ENCODE measurements at regions of chr2 and their contacts with region 1.

Region 1: DNA sequence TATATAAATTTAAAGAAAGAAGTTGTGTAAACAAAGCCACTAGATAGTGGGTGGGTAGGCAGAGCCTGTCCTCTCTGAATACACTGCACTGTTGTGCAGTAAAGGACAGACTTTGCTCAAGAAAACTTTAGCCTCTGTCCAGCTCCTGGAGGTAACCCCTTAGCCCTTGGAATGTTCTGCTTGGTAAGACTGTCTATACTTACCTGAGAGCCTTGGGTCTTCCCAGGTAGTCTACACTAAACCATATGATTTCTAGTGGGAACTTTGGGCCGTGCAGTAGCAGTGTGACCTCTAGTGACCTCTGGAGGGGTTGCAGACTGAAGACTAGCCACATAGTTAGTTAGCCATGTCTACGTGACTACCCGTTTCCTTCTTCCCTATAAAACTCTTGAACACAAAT is 678.3 kb upstream of the NRXN1 start:
- DNase-seq: peak; percentile 12
- ATAC-seq: peak; percentile 79
- H3K4me3 ChIP-seq: no peak overlapping the region
- H3K27ac ChIP-seq: no peak overlapping the region
- H3K4me1 ChIP-seq: no peaks in the 10 kb centered on the region
- H3K27me3 ChIP-seq: no peaks in the 10 kb centered on the region
- CTCF ChIP-seq: peak in 1 of 3 experiments; percentile 38; a peak in 2 of 6 replicates
- POLR2A ChIP-seq: no peak
- RAD21 ChIP-seq: peak; percentile 48

Region 2: DNA sequence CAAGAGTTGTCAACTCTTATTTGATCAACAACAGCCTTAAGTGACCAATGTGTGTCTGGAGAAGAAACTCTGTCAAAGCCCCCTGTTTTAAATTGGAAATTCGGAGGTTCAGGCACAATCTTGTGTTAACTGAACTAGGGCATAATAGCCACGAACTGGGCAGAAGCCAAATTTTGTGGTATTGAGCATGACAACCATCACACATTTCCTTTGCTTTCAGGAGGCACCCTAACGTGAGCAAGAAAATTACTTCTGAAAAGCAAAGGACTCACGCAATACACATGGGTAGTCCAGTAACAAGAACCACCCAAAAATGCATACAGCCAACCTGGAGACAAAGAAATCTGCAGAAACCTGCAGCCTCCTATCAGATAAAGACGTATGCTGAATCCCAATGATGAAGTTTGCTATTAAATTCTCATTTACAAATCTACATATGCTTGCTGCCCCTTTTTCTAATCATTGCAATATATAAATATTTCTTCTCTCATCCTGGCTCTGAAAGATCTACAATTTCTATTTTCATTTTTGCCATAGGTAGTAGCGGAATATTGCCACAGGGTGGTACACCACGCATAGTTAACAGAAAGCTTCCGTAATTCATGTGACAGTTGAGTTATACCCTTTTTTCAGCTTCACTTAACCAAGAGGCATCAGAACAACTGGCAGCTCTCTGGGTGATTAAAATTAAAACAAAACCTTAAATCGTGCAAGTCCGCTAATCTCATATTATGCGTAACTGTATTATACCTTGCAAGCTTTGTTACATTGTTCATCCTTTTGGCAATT is 1174.1 kb before region 1 on chr2:
- CTCF ChIA-PET with region 1: no interaction called
- POLR2A ChIA-PET with region 1: no interaction called
- RAD21 ChIA-PET with region 1: no interaction called
- intact Hi-C with region 1: loop called (anchors 5 kb)
- DNase-seq: peak; percentile 10
- ATAC-seq: peak; percentile 67
- H3K4me3 ChIP-seq: no peak overlapping the region
- H3K27ac ChIP-seq: no peak overlapping the region
- H3K4me1 ChIP-seq: no peaks in the 10 kb centered on the region
- H3K27me3 ChIP-seq: no peaks in the 10 kb centered on the region
- CTCF ChIP-seq: peak; percentile 29 to 65 (median 47); a peak in 5 of 6 replicates
- POLR2A ChIP-seq: no peak
- RAD21 ChIP-seq: peak; percentile 72

Region 3: DNA sequence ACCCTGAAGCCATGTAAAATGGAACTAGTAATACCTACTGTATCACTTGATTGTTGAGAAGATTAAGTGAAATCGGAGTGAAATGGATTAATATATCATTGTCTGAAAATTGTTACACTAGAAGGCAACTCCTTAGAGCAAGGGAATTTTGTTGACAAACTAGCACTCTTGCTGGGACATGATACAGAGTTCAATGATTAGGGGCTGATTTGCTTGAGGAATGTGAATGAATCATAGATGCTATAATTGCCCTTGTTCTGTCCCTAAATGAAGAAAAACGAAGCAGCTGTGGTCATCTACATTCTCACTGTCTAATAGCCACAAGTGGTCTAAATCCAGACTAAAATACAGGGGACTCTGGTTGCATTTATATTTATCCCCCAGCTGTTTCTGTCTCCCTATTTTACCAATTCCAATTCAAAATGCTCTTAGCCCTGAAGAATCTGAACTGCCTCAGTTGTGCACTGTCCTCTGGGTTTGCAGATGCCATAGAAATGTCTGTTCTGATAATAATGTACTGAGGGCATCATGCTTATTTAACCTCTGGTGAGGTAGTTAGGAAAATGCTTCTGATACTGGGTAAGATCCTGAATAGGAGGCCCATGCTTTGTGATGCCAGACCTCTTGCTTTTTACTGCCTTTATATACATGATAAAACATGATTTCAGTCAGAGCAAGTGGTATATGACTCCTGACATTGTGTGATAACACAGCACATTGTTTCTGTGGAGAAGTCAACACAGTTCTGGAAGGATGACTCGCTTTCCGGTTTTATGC is 1060.4 kb before region 1 on chr2:
- CTCF ChIA-PET with region 1: no interaction called
- POLR2A ChIA-PET with region 1: no interaction called
- RAD21 ChIA-PET with region 1: no interaction called
- intact Hi-C with region 1: no loop called
- DNase-seq: no peak
- ATAC-seq: no peak
- H3K4me3 ChIP-seq: no peak overlapping the region
- H3K27ac ChIP-seq: no peak overlapping the region
- H3K4me1 ChIP-seq: no peaks in the 10 kb centered on the region
- H3K27me3 ChIP-seq: no peaks in the 10 kb centered on the region
- CTCF ChIP-seq: no peak
- POLR2A ChIP-seq: no peak
- RAD21 ChIP-seq: no peak

Region 4: DNA sequence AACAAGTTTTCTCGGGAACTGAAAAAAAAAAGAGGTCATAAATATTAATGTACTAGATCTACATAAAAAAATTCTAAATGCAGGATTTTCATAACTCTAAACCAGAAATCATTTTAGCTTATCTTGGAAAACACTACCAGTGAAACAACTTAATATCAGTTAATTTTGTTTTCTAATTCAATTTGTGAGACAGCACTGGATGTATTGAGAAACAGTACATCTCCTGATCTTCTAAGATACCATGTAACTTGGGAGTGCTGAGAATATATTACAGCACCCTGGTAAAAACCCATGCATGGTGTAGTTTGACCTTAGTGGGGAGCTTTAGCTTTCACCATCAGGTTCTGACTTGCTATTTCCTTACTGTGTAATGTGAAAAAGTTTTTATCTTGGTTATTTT is 807.9 kb before region 1 on chr2:
- CTCF ChIA-PET with region 1: no interaction called
- POLR2A ChIA-PET with region 1: no interaction called
- RAD21 ChIA-PET with region 1: no interaction called
- intact Hi-C with region 1: no loop called
- DNase-seq: no peak
- ATAC-seq: no peak
- H3K4me3 ChIP-seq: no peak overlapping the region
- H3K27ac ChIP-seq: no peak overlapping the region
- H3K4me1 ChIP-seq: no peaks in the 10 kb centered on the region
- H3K27me3 ChIP-seq: no peaks in the 10 kb centered on the region
- CTCF ChIP-seq: no peak
- POLR2A ChIP-seq: no peak
- RAD21 ChIP-seq: no peak

Measured in HCT116 (cell line).